ENCODE measurements at regions of chr17 and their contacts with region 1.

Region 1: DNA sequence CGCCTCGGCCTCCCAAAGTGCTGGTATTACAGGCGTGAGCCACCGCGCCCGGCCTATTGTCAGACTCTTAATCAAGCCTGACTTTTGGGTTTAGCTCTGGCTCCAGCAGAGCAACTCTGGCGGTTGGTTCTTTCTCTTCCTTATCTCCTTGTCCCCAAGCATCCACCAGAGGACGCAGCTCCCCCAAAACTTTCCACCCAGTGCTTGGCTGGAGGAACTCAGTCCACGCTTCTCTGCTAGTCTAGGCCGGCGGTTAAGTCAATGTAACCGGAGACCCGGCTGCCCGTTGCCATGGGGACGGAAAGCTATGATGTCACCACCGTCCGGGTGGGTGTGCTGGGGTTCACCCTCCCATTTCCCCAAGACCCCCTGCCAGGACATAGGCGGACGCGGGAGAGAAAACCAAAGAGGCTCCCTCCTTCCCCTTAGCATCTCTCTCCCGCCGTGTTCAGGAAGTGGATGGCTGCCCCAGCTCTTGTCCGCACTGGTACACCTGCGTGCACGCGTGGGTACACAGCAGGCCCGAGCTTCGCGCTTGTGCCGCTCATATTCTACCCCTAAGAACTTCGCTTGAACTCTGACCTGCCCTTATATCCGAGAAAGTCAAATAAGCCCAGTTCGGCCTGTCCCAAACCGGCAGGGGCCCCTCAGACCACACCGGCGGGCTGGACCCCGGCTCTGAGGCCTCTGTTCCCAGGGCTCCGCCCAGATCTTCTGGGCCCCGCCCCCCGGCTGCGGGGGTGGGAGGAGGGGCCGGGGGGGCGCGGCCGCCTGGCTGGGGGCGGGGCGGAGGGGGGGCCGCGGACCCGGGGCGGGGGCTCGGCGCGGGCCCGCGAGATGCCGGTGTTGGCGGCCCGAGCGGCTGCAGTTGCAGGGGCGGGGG is at the start of gene RND2:
- DNase-seq: peak; percentile 87 to 98 (median 94)
- H3K4me3 ChIP-seq: peak within 1 kb of the TSS in 3 of 4 donors; percentile 5 to 79 (median 17)
- H3K27ac ChIP-seq: peak within 1 kb of the TSS in 3 of 5 donors; percentile 34 to 87 (median 72)
- H3K4me1 ChIP-seq: peaks cover 9 to 21% of the 10 kb centered on the region in 2 donors
- H3K27me3 ChIP-seq: no peaks in the 10 kb centered on the region
- CTCF ChIP-seq: peak; percentile 50 to 92 (median 86)
- POLR2A ChIP-seq: peak in 1 of 2 donors; percentile 28
- total RNA-seq, gene RND2: 1.3 to 8.2 (median 4.0) TPM

Region 2: DNA sequence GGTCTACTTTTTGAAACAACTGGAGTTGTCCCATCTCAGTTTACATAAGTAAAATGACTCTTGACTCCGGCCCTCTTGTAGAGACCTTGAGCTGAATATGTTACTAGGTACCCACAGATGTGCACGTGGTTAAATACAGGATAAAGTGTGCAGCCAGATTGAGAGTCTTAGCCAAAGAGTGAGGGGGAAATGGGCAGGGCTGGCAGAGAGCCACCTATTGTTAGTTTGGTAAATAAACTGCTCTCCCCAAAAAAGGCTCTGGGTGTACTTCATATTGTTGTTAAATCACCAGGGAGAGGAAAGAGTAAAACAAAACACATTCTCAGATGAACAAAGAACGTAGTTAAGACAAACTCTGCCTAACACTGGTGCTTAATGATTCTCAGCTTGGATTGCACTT is 103.7 kb before region 1 on chr17:
- intact Hi-C with region 1: no loop called
- DNase-seq: peak in 3 of 7 donors; percentile 17 to 33 (median 27)
- H3K4me3 ChIP-seq: no peak overlapping the region
- H3K27ac ChIP-seq: peak overlapping the region in 1 of 5 donors; percentile 15
- H3K4me1 ChIP-seq: no peaks in the 10 kb centered on the region
- H3K27me3 ChIP-seq: no peaks in the 10 kb centered on the region
- CTCF ChIP-seq: no peak
- POLR2A ChIP-seq: no peak

Region 3: DNA sequence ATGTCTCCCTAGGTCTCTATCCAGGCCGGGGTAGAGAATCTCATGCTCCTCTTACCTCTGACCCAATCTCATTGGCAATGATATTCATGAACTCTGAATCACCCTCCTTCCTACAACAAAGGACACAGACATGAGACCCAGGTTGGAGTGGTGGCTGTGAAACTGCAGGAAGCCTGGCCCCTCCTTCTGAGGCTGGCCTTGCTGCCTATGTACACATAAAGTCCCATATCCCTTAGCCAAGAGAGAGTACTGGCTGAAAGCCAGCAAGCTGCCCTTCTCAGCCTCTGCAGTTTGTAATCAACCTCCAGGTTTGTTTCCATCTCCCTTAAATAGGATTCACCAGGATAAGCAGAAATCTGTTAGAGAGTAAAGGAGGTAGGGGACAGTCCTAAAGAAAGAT is 71.0 kb before region 1 on chr17:
- intact Hi-C with region 1: no loop called
- DNase-seq: peak in 1 of 7 donors; percentile 16
- H3K4me3 ChIP-seq: no peak overlapping the region
- H3K27ac ChIP-seq: no peak overlapping the region
- H3K4me1 ChIP-seq: no peaks in the 10 kb centered on the region
- H3K27me3 ChIP-seq: no peaks in the 10 kb centered on the region
- CTCF ChIP-seq: no peak
- POLR2A ChIP-seq: no peak

Region 4: DNA sequence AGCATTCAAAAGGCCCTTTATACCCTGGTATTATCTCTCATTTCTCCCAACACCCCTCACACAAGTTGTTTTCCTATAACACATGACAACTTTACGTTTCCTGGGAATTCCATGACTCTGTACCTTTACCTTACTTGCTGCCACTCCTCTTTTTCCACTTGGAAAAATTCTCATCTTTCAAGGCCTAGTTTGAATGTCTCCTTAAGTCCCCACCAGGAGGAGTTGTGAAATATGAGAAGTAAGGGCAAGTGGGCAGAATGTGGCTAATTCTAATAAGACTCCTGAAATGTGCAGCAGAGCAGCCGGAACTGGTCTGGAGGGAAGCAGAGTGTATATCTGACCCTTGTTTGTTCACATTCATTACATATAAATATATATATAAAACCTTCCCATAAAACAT is 60.8 kb after region 1 on chr17:
- intact Hi-C with region 1: loop called in 1 of 2 experiments (anchors 10 kb)
- DNase-seq: no peak
- H3K4me3 ChIP-seq: no peak overlapping the region
- H3K27ac ChIP-seq: peak overlapping the region in 1 of 5 donors; percentile 80
- H3K4me1 ChIP-seq: peaks cover 0 to 6% of the 10 kb centered on the region in 2 donors
- H3K27me3 ChIP-seq: no peaks in the 10 kb centered on the region
- CTCF ChIP-seq: no peak
- POLR2A ChIP-seq: no peak

Region 5: GRCh38 chr17:43125133-43125966 is 100.7 kb after region 1 on chr17 and contains the start of gene BRCA1:
- intact Hi-C with region 1: loop called in 1 of 2 experiments (anchors 5 kb)
- DNase-seq: peak; percentile 92 to 98 (median 96)
- H3K4me3 ChIP-seq: peak within 1 kb of the TSS; percentile 5 to 81 (median 42)
- H3K27ac ChIP-seq: peak within 1 kb of the TSS in 4 of 5 donors; percentile 67 to 89 (median 73)
- H3K4me1 ChIP-seq: peaks cover 15 to 17% of the 10 kb centered on the region in 2 donors
- H3K27me3 ChIP-seq: no peaks in the 10 kb centered on the region
- CTCF ChIP-seq: no peak
- POLR2A ChIP-seq: peak in 1 of 2 donors; percentile 54
- total RNA-seq, gene BRCA1: 1.9 to 10.4 (median 5.7) TPM

Region 6: DNA sequence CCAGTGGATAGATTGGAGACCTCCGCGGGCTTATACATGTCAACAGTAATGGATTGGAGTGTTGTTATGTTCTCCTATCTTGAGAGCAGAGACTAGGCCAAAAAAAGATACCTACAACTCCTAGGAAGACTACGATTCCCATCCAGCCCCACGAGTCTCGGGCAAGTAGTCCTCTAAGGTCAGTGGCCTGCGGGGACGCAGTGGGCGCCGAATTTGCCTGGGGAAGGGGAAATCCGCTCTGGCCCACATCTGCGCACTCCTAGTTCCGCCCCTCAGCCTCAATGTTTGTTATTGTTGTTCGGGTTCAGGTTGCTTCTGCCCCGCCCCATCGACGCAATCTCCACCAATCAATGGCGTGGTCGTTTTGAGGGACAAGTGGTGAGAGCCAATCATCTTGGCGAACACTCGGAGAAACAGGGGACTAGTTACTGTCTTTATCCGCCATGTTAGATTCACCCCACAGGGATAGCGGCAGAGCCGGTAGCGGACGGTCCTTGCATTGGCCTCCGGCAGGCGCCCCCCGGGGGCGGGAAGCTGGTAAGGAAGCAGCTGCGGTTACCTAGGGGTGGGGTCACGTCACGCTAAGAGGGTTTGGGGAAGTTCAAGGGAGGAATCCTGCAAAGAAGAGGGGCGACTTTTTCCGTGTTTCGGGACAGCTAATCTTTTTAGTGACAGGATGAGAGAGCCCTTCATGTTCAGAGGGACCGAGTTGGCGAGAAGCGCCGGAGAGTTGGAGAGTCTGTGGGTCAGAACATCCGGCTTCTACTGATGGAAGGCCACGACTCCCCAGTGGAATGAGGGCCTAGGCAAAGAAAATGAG is 146.3 kb after region 1 on chr17 and contains the start of gene NBR1:
- intact Hi-C with region 1: loop called in 1 of 2 experiments (anchors 5 kb)
- DNase-seq: peak; percentile 95 to 99 (median 97)
- H3K4me3 ChIP-seq: peak within 1 kb of the TSS; percentile 51 to 82 (median 73)
- H3K27ac ChIP-seq: peak within 1 kb of the TSS; percentile 78 to 98 (median 97)
- H3K4me1 ChIP-seq: peaks cover 25 to 52% of the 10 kb centered on the region in 2 donors
- H3K27me3 ChIP-seq: no peaks in the 10 kb centered on the region
- CTCF ChIP-seq: no peak
- POLR2A ChIP-seq: peak; percentile 63 to 94
- total RNA-seq, gene NBR1: 63.6 to 139 (median 110) TPM

Region 7: DNA sequence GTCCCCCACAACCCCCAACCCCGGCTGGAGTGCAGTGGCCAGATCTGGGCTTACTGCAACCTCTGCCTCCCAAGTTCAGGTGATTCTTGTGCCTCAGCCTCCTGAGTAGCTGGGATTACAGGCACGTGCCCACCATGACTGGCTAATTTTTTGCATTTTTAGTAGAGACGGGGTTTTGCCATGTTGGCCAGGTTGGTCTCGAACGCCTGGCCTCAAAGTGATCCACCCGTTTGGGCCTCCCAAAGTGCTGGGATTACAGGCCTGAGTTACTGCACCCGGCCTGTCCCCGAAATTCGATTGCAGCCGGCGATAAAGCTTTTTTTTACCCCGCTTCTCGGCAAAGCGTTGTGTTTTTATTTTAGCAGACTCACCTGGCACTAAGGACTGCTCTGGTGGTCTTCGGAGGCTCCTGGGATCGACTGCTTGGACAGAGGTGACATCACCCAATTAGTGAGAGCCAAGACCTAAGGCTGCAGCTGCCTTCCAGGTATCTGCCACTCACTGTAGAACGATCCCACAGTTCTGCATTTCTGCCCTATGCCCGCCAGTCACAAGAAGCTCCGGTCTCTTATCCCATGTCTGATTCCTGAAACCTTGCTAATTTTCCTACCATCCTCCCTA is 292.0 kb after region 1 on chr17:
- intact Hi-C with region 1: loop called in 1 of 2 experiments (anchors 10 kb)
- DNase-seq: peak in 2 of 7 donors; percentile 19 to 58
- H3K4me3 ChIP-seq: no peak overlapping the region
- H3K27ac ChIP-seq: no peak overlapping the region
- H3K4me1 ChIP-seq: no peaks in the 10 kb centered on the region
- H3K27me3 ChIP-seq: no peaks in the 10 kb centered on the region
- CTCF ChIP-seq: no peak
- POLR2A ChIP-seq: no peak

Measured in adrenal gland (tissue), 19 donors.